Lower lobe of right lung (tissue), 2 donors: ENCODE measurements at regions of chr1 and their contacts with region 1.

Region 1: GRCh38 chr1:205977402-205978014 is 25.7 kb downstream of the RAB7B start:
- DNase-seq: peak; percentile 70
- ATAC-seq: peak; percentile 82 to 88
- H3K4me3 ChIP-seq: no peak overlapping the region
- H3K27ac ChIP-seq: no peak overlapping the region
- H3K4me1 ChIP-seq: peaks cover 6% of the 10 kb centered on the region
- H3K27me3 ChIP-seq: no peaks in the 10 kb centered on the region
- CTCF ChIP-seq: peak; percentile 97

Region 2: GRCh38 chr1:205791568-205792180 is 185.8 kb before region 1 on chr1:
- intact Hi-C with region 1: loop called (anchors 10 kb)
- DNase-seq: peak; percentile 65
- ATAC-seq: peak; percentile 86 to 92
- H3K4me3 ChIP-seq: no peak overlapping the region
- H3K27ac ChIP-seq: no peak overlapping the region
- H3K4me1 ChIP-seq: no peaks in the 10 kb centered on the region
- H3K27me3 ChIP-seq: no peaks in the 10 kb centered on the region
- CTCF ChIP-seq: peak; percentile 80